ENCODE measurements at regions of chr9 and their contacts with region 1.

Region 1: DNA sequence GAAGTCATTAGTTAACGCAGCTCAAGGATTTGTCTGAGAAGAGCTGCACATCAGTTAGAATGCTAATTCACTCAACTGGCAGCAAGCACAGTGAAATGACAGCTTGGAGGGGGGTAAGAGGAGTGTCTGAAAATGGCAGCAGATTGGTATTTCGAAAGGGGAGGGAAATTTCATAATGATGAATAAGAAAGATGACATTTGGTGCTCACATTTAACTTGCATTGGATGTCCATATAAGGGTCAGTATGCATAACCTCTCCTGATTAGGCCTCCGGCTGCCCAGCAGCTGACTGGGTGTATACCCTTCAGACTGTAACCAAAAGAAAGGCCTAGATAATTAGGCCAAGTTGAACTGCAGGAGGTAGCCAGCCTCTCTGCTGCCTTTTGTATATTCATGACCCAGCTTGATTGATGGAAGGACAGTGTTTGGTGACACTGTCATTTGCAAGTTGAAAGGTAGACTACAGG is 131.0 kb downstream of the PBX3 start:
- DNase-seq: no peak
- H3K4me3 ChIP-seq: no peak overlapping the region
- H3K27ac ChIP-seq: no peak overlapping the region
- H3K4me1 ChIP-seq: no peaks in the 10 kb centered on the region
- H3K27me3 ChIP-seq: no peaks in the 10 kb centered on the region
- CTCF ChIP-seq: no peak
- EP300 ChIP-seq: no peak
- POLR2A ChIP-seq: no peak

Region 2: GRCh38 chr9:125850763-125851162 is 27.4 kb before region 1 on chr9:
- intact Hi-C with region 1: no loop called
- DNase-seq: no peak
- H3K4me3 ChIP-seq: no peak overlapping the region
- H3K27ac ChIP-seq: no peak overlapping the region
- H3K4me1 ChIP-seq: peaks cover 3% of the 10 kb centered on the region
- H3K27me3 ChIP-seq: no peaks in the 10 kb centered on the region
- CTCF ChIP-seq: no peak
- EP300 ChIP-seq: no peak
- POLR2A ChIP-seq: no peak

Region 3: DNA sequence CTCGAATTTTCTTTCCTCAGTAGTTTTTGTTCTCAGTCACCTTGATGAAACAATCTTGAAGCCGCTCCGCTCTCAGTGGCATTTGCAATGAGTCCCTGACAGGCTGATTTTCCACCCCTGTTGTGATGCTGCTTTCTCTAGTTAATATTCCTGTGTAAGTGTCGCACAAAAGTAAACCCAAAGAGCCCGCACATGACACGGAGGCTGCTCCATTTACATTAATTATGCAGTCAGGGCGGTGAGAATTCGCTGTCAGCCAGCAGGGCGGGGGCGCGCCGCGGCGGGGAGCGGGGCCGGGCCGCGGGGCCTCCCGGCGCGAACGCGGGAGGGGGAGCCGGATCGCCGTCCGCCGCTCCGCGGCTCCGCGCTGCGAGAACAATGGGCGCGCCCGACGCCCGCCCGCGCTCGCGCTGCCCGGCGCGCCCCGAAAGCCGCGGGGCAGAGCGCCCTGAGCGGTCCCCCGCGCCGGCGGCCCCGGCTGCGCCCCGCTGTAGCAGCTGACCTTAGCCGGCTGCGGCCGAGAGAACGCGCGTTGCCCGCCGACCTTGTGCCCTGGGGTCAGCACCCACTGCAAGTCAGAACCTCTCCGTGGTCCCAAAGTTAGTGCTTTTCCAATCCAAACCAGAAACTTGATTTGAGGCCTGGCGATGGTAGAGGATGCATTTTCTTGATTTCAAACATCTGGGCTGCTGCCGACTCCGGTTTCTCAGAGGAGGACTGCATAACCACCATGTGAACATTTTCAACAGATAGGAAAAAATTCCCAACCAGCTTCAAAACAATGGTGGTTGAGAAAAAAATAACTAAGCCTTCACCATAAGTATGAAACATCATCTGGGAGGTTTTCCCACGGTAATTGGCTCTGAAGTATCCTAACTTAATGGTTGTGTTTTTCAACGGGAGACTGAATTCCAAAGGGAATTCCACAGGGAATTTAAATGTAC is 11.6 kb after region 1 on chr9:
- intact Hi-C with region 1: loop called in 1 of 4 experiments (anchors 1 kb)
- DNase-seq: peak; percentile 41 to 72 (median 63)
- H3K4me3 ChIP-seq: peak overlapping the region; percentile 49
- H3K27ac ChIP-seq: peak overlapping the region; percentile 64 to 83
- H3K4me1 ChIP-seq: no peaks in the 10 kb centered on the region
- H3K27me3 ChIP-seq: no peaks in the 10 kb centered on the region
- CTCF ChIP-seq: no peak
- EP300 ChIP-seq: no peak
- POLR2A ChIP-seq: no peak

Region 4: GRCh38 chr9:126375386-126375785 is 497.2 kb after region 1 on chr9:
- intact Hi-C with region 1: no loop called
- DNase-seq: no peak
- H3K4me3 ChIP-seq: no peak overlapping the region
- H3K27ac ChIP-seq: no peak overlapping the region
- H3K4me1 ChIP-seq: peaks cover 5% of the 10 kb centered on the region
- H3K27me3 ChIP-seq: no peaks in the 10 kb centered on the region
- CTCF ChIP-seq: no peak
- EP300 ChIP-seq: no peak
- POLR2A ChIP-seq: no peak

Region 5: GRCh38 chr9:126564711-126565110 is 686.5 kb after region 1 on chr9:
- intact Hi-C with region 1: no loop called
- DNase-seq: no peak
- H3K4me3 ChIP-seq: no peak overlapping the region
- H3K27ac ChIP-seq: no peak overlapping the region
- H3K4me1 ChIP-seq: no peaks in the 10 kb centered on the region
- H3K27me3 ChIP-seq: no peaks in the 10 kb centered on the region
- CTCF ChIP-seq: no peak
- EP300 ChIP-seq: no peak
- POLR2A ChIP-seq: no peak